Stomach (tissue), 19 donors: ENCODE measurements at regions of chr1 and their contacts with region 1.

Region 1: GRCh38 chr1:234963180-234963903 is 165.3 kb downstream of the TOMM20 start:
- DNase-seq: peak; percentile 88 to 92
- H3K4me3 ChIP-seq: no peak overlapping the region
- H3K27ac ChIP-seq: peak overlapping the region; percentile 50 to 93 (median 93)
- H3K4me1 ChIP-seq: peaks cover 65 to 75% (median 68%) of the 10 kb centered on the region in 4 donors
- H3K27me3 ChIP-seq: no peaks in the 10 kb centered on the region
- CTCF ChIP-seq: no peak
- EP300 ChIP-seq: no peak
- POLR2A ChIP-seq: no peak

Region 2: DNA sequence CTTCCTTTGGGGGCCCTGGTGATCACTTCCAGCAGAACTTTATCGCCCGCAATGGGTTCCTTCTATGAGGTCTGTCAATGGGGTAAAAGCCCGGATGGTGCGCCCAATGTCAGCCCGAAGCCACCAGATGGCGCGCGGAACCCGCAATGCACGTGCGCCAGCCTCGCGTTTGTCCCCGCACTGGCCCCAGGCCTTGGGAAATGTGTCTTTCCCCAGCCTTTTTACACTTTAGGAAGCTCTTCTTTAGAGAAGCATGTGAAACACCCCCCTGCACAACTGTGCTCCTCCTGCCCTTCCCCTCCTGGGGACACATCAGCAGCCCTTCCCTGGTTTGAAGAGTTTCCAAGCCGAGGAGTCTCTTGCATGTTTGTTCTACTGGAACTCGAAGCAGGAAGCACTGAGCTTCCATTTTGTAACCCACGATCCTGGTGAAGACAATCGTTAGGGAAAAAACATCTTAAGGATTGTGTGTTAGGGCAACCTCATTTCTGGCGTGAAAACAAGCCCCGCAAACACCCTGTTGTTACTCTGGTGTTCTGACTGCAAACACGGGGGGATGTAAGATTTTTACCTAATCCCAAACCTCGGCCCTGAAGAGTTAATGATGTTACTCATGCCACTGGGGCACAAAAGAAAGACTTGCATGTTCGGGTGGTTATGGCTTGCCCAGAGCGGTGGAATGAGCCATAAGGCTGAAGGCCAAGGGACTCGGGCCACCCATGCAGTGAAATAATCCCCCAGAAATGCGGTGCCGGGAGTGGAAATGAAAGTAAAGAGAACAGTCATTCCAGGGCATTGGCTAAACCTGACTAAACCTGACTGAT is 464.0 kb before region 1 on chr1:
- intact Hi-C with region 1: loop called (anchors 10 kb)
- DNase-seq: peak; percentile 94 to 96
- H3K4me3 ChIP-seq: peak overlapping the region in 3 of 4 donors; percentile 9 to 14 (median 12)
- H3K27ac ChIP-seq: peak overlapping the region; percentile 43 to 87 (median 86)
- H3K4me1 ChIP-seq: peaks cover 14 to 45% (median 23%) of the 10 kb centered on the region in 4 donors
- H3K27me3 ChIP-seq: no peaks in the 10 kb centered on the region
- CTCF ChIP-seq: peak in 5 of 7 experiments; percentile 88 to 94 (median 92)
- EP300 ChIP-seq: peak; percentile 53
- POLR2A ChIP-seq: no peak